Body of pancreas (tissue), 4 donors: ENCODE measurements at regions of chr11 and their contacts with region 1.

Region 1: GRCh38 chr11:45110562-45110961 is 35.9 kb upstream of the PRDM11 start:
- DNase-seq: peak; percentile 36 to 70 (median 59)
- ATAC-seq: peak; percentile 60
- H3K4me3 ChIP-seq: no peak overlapping the region
- H3K27ac ChIP-seq: no peak overlapping the region
- H3K4me1 ChIP-seq: no peaks in the 10 kb centered on the region
- H3K27me3 ChIP-seq: no peaks in the 10 kb centered on the region
- CTCF ChIP-seq: peak; percentile 70 to 87 (median 75)
- POLR2A ChIP-seq: no peak

Region 2: DNA sequence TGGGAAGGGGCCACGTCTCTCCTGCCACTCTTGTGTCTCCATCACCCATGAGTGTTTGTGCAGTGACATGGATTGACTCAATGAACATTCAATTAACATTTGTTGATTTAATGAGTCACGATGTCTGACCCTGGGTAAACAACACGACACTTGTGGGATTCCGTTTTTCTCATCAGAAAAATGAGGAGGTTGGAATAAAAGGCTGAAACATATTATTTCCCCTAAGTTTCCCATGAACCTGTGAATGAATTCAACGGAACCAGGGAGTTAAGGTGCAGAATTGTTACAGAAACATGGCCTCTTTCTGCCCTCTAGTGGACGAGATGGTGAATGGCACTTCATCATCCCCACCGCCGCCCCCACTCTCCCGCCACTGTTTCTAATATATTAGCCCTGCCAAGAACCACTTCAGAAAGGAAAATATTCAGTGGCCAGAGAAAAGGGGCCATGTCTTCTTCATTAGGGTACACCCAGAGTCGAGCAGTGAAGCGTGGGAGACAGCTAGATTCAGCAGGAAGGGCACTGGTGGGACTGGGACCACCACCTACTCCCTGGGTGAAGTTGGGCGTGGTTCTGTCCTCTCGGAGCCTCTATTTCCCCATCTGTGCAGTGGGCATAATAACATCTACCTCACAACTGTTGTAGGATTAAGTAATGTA is 221.8 kb after region 1 on chr11:
- intact Hi-C with region 1: loop called (anchors 5 kb)
- DNase-seq: peak; percentile 38 to 51 (median 44)
- ATAC-seq: peak; percentile 66
- H3K4me3 ChIP-seq: no peak overlapping the region
- H3K27ac ChIP-seq: no peak overlapping the region
- H3K4me1 ChIP-seq: peaks cover 10% of the 10 kb centered on the region
- H3K27me3 ChIP-seq: no peaks in the 10 kb centered on the region
- CTCF ChIP-seq: peak; percentile 47 to 92 (median 60)
- POLR2A ChIP-seq: no peak

Region 3: DNA sequence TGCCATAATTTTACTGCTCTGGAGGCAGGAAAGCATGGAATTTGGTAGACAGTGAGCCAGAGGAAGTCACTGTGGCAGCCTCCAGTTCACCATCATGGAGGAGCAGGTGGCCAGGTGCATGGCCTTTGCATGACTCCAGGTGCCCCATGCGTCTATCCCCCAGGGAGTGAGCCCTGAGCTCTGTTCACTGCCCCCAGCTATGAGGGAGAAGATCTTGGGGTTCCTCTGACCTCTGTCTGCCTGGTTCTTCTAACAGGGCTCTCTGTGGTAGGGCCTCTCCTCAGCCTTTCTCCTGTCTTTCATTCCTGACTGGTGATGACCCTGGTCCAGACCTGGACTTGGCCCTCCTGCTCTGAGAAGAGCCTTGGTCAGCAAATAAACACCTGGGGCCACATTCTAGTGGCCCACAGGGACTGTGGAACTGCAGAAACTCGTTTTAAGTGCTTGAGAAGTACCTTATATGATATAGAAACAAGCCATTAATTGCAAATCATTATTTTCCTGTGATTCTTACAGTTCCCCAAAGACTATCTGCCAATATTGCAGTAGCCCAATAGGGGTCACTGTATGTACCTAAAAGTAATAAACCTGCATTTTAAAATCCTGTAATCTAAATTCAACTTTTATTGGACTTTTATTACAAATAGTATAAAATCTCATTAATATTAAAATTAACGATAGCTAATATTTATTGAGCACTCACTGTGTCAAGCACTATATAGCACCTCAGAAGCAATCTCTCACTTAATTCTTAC is 295.5 kb after region 1 on chr11:
- intact Hi-C with region 1: no loop called
- DNase-seq: no peak
- ATAC-seq: no peak
- H3K4me3 ChIP-seq: no peak overlapping the region
- H3K27ac ChIP-seq: no peak overlapping the region
- H3K4me1 ChIP-seq: no peaks in the 10 kb centered on the region
- H3K27me3 ChIP-seq: no peaks in the 10 kb centered on the region
- CTCF ChIP-seq: peak in 6 of 7 experiments; percentile 14 to 44 (median 30)
- POLR2A ChIP-seq: no peak